CD8-positive, alpha-beta T cell (primary cell): ENCODE measurements at regions of chr9 and their contacts with region 1.

Region 1: GRCh38 chr9:16705121-16705604 is 165.3 kb downstream of the BNC2 start:
- DNase-seq: no peak
- ATAC-seq: no peak
- H3K4me3 ChIP-seq: no peak overlapping the region
- H3K4me3 Mint-ChIP-seq: no peak overlapping the region
- H3K27ac ChIP-seq: no peak overlapping the region
- H3K27ac Mint-ChIP-seq: no peak overlapping the region
- H3K4me1 ChIP-seq: no peaks in the 10 kb centered on the region
- H3K4me1 Mint-ChIP-seq: no peaks in the 10 kb centered on the region
- H3K27me3 ChIP-seq: no peaks in the 10 kb centered on the region
- H3K27me3 Mint-ChIP-seq: no peaks in the 10 kb centered on the region
- CTCF ChIP-seq: no peak

Region 2: DNA sequence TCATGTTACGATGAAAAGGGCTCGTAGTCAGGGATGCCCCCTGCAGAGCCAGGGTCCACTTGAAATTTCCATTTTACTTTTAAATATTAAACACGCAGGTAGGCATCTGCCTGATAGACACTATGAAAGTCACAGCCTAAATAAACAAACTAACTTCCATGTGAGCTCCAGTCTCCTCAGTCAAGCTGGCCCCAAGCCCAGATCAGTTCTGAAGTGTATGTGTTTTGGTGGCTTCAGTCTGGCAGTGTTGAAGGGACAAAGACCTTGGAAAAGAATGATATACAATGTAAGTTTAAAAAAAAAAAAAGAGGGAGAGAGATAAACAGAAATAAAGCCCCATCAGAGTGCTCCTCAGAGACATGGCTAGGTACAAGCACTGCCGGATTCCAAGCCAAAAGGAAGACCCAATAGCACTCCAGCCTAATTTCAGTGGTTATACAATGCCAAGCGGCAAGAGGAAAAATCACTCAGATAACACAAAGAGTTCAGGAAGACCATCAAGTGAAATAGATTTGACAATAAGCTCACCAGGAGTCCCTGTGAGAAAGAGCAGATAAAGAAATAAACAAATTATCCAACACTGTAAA is 15.7 kb before region 1 on chr9:
- CTCF ChIA-PET with region 1: no interaction called
- POLR2A ChIA-PET with region 1: no interaction called
- intact Hi-C with region 1: no loop called
- DNase-seq: no peak
- ATAC-seq: no peak
- H3K4me3 ChIP-seq: no peak overlapping the region
- H3K4me3 Mint-ChIP-seq: no peak overlapping the region
- H3K27ac ChIP-seq: no peak overlapping the region
- H3K27ac Mint-ChIP-seq: no peak overlapping the region
- H3K4me1 ChIP-seq: no peaks in the 10 kb centered on the region
- H3K4me1 Mint-ChIP-seq: no peaks in the 10 kb centered on the region
- H3K27me3 ChIP-seq: no peaks in the 10 kb centered on the region
- H3K27me3 Mint-ChIP-seq: no peaks in the 10 kb centered on the region
- CTCF ChIP-seq: no peak

Region 3: DNA sequence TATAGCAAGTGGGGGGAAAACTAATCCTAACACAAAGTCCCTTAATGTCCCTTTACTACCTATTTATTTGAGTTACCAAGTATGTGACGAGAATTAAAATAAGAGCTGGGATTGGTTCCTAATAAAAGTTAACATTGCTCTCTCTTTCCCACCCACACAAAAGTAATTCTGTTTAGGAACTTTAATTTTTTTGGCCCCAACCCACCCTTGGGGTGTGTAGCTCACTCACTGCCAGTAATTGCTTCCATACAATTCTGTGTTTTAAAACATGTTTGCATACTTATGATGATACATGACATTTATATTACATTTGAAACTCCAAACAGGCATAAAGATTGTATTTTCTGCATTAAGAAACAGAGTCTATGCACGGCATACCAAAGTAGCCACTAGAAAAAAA is 58.8 kb after region 1 on chr9:
- CTCF ChIA-PET with region 1: no interaction called
- POLR2A ChIA-PET with region 1: no interaction called
- intact Hi-C with region 1: loop called in 1 of 2 experiments (anchors 5 kb)
- DNase-seq: no peak
- ATAC-seq: no peak
- H3K4me3 ChIP-seq: no peak overlapping the region
- H3K4me3 Mint-ChIP-seq: no peak overlapping the region
- H3K27ac ChIP-seq: no peak overlapping the region
- H3K27ac Mint-ChIP-seq: no peak overlapping the region
- H3K4me1 ChIP-seq: no peaks in the 10 kb centered on the region
- H3K4me1 Mint-ChIP-seq: no peaks in the 10 kb centered on the region
- H3K27me3 ChIP-seq: no peaks in the 10 kb centered on the region
- H3K27me3 Mint-ChIP-seq: no peaks in the 10 kb centered on the region
- CTCF ChIP-seq: no peak

Region 4: DNA sequence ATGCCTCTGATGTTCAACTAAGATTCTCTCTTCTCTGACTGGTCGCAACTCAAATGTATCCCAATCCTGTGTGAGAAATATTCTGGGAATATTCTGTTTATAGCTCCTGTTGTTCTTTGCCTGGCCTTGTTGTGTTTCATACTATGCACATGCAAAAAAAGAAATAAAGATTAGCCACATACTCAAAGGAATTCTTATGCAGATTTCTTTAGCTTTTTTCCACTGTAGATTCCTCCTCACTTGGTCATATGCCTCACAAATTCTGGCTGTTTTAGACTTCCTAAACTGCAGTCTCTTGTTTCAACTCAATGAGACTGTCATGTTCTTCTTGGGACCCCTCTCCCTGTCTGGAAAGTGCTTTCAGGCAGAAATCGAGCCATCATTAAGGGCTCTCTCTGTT is 656.2 kb after region 1 on chr9:
- CTCF ChIA-PET with region 1: no interaction called
- POLR2A ChIA-PET with region 1: no interaction called
- intact Hi-C with region 1: no loop called
- DNase-seq: no peak
- ATAC-seq: no peak
- H3K4me3 ChIP-seq: no peak overlapping the region
- H3K4me3 Mint-ChIP-seq: no peak overlapping the region
- H3K27ac ChIP-seq: no peak overlapping the region
- H3K27ac Mint-ChIP-seq: no peak overlapping the region
- H3K4me1 ChIP-seq: no peaks in the 10 kb centered on the region
- H3K4me1 Mint-ChIP-seq: no peaks in the 10 kb centered on the region
- H3K27me3 ChIP-seq: no peaks in the 10 kb centered on the region
- H3K27me3 Mint-ChIP-seq: no peaks in the 10 kb centered on the region
- CTCF ChIP-seq: no peak